ENCODE measurements at regions of chr5 and their contacts with region 1.

Region 1: DNA sequence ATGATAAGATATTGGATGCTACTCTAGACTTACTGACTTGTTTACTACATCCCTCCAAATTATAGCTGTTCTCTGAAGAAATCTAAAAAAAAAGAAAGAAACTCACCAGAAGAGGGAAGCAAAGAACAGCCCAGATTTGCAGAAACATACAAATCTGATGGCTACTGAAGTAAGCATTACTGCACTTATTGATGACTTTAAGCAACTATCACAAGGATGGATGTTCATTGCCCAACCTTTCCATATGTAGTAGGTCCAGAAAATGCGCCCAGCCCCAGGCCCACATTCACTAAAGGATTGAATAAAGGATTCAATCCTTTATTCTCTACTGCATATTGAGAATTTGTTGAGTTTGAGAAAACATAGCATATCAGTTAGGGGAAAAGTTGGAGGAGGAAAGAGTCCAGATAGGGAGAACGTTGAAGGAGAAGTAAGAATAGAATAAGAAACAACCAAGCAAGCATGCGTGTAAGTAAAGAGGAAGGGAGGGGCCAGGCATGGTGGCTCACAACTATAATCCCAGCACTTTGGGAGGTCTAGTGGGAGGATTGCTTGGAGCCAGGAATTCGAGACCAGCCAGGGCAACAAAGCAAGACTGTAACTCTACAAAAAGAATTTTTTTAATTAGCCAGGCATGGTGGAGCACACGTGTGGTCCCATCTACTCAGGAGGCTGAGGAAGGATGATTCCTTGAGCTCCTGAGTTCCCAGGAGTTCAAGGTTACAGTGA is 33.8 kb upstream of the DTWD2 start:
- DNase-seq: peak in 1 of 2 experiments; percentile 34
- H3K4me3 ChIP-seq: no peak overlapping the region
- H3K4me3 Mint-ChIP-seq: no peak overlapping the region
- H3K27ac Mint-ChIP-seq: no peak overlapping the region
- H3K4me1 ChIP-seq: no peaks in the 10 kb centered on the region
- H3K4me1 Mint-ChIP-seq: peaks cover 7% of the 10 kb centered on the region
- H3K27me3 ChIP-seq: no peaks in the 10 kb centered on the region
- H3K27me3 Mint-ChIP-seq: no peaks in the 10 kb centered on the region
- CTCF ChIP-seq: peak; percentile 53 to 54

Region 2: DNA sequence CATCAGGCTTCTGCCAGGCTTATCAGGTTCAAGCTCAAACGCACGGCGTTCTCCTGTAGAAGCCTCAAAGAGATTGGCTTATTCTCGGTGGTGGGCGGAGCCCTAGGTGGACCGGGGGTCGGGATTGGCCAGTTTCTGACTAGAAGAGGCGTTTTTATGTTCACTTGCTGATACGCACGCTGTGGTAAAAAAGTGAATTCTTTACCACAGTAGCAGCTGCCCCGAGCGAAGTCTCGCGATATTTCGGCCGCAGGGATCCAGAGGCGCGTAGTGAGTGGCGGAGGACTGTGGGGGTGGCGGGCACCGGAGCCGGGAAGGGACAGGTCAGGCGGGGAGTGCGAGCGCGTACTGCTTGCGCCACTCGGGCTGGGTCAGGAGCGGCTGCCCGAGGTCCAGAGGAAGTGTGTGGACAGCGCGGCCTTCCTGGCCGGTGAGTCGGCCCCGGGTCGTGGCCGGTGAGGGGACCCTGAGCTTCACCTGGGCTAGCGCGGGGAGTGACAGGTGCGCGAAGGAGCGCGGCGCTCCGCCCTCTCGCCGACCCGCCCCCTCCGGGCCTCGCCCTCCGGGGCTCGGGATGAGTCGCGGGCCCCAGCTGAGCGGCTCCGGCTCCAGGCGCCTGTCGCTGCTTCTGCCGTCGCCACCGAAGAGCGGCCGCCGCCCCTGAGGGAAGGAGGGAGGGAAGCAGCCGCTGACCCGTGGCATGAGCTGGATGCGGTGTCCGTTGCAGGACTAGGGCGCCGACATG is 48.8 kb after region 1 on chr5 and contains the start of gene DMXL1:
- CTCF ChIA-PET with region 1: interaction called, 7 read pairs
- POLR2A ChIA-PET with region 1: no interaction called
- intact Hi-C with region 1: loop called (anchors 2 kb)
- DNase-seq: peak; percentile 99 to 100
- H3K4me3 ChIP-seq: peak within 1 kb of the TSS; percentile 86
- H3K4me3 Mint-ChIP-seq: peak within 1 kb of the TSS; percentile 86
- H3K27ac Mint-ChIP-seq: peak within 1 kb of the TSS; percentile 96
- H3K4me1 ChIP-seq: no peaks in the 10 kb centered on the region
- H3K4me1 Mint-ChIP-seq: peaks cover 6% of the 10 kb centered on the region
- H3K27me3 ChIP-seq: no peaks in the 10 kb centered on the region
- H3K27me3 Mint-ChIP-seq: no peaks in the 10 kb centered on the region
- CTCF ChIP-seq: no peak
- total RNA-seq, gene DMXL1: 30.0 and 33.1 TPM in 2 replicates

Region 3: DNA sequence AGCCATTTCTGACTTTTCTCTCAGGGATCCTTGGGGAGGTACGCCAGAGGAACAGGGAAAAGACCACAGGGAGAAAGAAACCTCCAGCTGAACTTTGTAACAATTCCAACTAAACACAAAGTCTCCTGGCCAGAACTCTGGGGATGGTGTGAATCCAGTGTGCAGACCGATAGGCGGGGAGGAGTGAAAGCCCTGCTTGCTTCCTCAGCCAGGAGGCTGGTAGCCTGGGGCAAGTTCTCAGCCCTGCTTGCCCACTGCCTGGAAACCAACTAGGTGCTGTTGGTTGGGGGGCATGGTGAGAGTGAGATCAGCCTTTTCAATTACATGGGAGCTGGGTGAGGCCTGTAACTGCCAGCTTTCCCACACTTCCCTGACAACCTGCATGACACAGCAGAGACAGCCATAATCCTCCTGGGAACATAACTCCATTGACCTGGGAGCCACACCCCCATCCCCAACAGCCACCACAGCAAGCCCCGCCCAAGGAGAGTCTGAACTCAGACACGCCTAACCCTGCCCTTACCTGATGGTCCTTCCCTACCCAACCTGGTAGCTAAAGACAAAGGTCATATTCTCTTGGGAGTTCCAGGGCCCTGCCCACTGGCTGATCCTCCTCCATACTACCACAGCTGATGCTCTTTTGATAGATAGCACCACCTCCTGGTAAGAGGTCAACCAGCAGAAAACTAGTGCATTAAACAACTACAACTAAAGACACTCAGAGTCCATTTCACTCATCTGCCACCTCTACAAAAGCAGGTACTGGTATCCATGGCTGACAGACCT is 233.6 kb after region 1 on chr5:
- CTCF ChIA-PET with region 1: no interaction called
- POLR2A ChIA-PET with region 1: no interaction called
- intact Hi-C with region 1: loop called (anchors 1 kb)
- DNase-seq: peak; percentile 71 to 88
- H3K4me3 ChIP-seq: no peak overlapping the region
- H3K4me3 Mint-ChIP-seq: no peak overlapping the region
- H3K27ac Mint-ChIP-seq: peak overlapping the region; percentile 51
- H3K4me1 ChIP-seq: peaks cover 9% of the 10 kb centered on the region; the same call in 1 of the 2 replicates
- H3K4me1 Mint-ChIP-seq: no peaks in the 10 kb centered on the region
- H3K27me3 ChIP-seq: no peaks in the 10 kb centered on the region
- H3K27me3 Mint-ChIP-seq: no peaks in the 10 kb centered on the region
- CTCF ChIP-seq: peak; percentile 12 to 34

Region 4: DNA sequence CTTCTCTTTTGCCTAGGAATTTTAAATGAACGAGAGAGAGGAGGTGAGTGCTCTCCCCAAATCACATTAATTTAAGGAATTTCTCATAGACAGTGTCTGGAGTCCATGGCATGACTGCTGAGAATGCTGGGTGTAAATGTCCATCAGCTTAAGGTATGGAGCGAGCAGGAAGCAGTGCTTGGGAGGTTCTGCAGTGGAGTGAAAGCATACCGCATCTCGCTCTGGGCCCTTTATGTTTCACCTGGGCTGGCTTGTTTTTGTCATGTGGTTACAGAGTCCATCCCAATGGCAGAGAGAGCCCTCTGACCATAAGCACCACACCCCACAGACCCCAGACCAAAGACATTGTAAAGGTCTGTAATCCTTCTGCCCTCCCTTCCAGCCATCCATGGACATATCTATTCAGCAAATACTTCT is 313.1 kb after region 1 on chr5:
- CTCF ChIA-PET with region 1: interaction called, 14 read pairs
- POLR2A ChIA-PET with region 1: no interaction called
- intact Hi-C with region 1: loop called (anchors 1 kb)
- DNase-seq: no peak
- H3K4me3 ChIP-seq: no peak overlapping the region
- H3K4me3 Mint-ChIP-seq: no peak overlapping the region
- H3K27ac Mint-ChIP-seq: no peak overlapping the region
- H3K4me1 ChIP-seq: peaks cover 7% of the 10 kb centered on the region
- H3K4me1 Mint-ChIP-seq: peaks cover 17% of the 10 kb centered on the region
- H3K27me3 ChIP-seq: no peaks in the 10 kb centered on the region
- H3K27me3 Mint-ChIP-seq: no peaks in the 10 kb centered on the region
- CTCF ChIP-seq: no peak

Measured in Caco-2 (cell line).